GM12878 (cell line): ENCODE measurements at regions of chr11 and their contacts with region 1.

Region 1: GRCh38 chr11:55819330-55819729 is at the start of gene OR5D18:
- DNase-seq: no peak
- ATAC-seq: no peak
- H3K4me3 ChIP-seq: no peak within 1 kb of the TSS
- H3K27ac ChIP-seq: no peak within 1 kb of the TSS
- H3K4me1 ChIP-seq: no peaks in the 10 kb centered on the region
- H3K27me3 ChIP-seq: no peaks in the 10 kb centered on the region
- CTCF ChIP-seq: no peak
- EP300 ChIP-seq: no peak
- POLR2A ChIP-seq: no peak
- RAD21 ChIP-seq: no peak
- polyA plus RNA-seq, gene OR5D18: not detected

Region 2: DNA sequence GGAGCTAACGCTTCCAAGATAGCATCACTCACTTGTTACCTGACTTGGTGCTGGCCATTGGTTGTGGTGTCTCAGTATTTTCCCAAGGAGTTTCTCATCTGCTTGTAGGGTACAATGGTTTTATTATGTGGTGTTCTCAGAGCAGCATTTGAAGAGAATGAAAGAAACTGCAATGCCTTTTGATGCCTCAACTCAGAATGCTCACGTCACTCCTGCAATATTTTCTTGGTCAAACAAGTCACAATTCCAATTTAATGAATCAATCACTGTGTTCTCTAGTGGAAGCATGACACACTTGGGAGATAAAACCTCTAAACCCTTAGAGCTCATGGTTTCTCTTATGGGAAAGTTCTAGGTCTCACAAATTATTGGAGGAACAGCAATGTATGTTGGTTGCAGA is 26.0 kb before region 1 on chr11:
- CTCF ChIA-PET with region 1: no interaction called
- POLR2A ChIA-PET with region 1: no interaction called
- RAD21 ChIA-PET with region 1: no interaction called
- SMC1A ChIA-PET with region 1: no interaction called
- in situ Hi-C with region 1: no loop called
- intact Hi-C with region 1: no loop called
- DNase-seq: no peak
- ATAC-seq: no peak
- H3K4me3 ChIP-seq: no peak overlapping the region
- H3K27ac ChIP-seq: no peak overlapping the region
- H3K4me1 ChIP-seq: no peaks in the 10 kb centered on the region
- H3K27me3 ChIP-seq: no peaks in the 10 kb centered on the region
- CTCF ChIP-seq: no peak
- EP300 ChIP-seq: no peak
- POLR2A ChIP-seq: no peak
- RAD21 ChIP-seq: no peak

Region 3: GRCh38 chr11:55838452-55838851 is 19.1 kb after region 1 on chr11 and contains the start of gene OR5D16:
- CTCF ChIA-PET with region 1: no interaction called
- POLR2A ChIA-PET with region 1: no interaction called
- RAD21 ChIA-PET with region 1: no interaction called
- SMC1A ChIA-PET with region 1: no interaction called
- in situ Hi-C with region 1: no loop called
- intact Hi-C with region 1: loop called (anchors 1 kb)
- DNase-seq: no peak
- ATAC-seq: no peak
- H3K4me3 ChIP-seq: no peak within 1 kb of the TSS
- H3K27ac ChIP-seq: no peak within 1 kb of the TSS
- H3K4me1 ChIP-seq: no peaks in the 10 kb centered on the region
- H3K27me3 ChIP-seq: no peaks in the 10 kb centered on the region
- CTCF ChIP-seq: no peak
- EP300 ChIP-seq: no peak
- POLR2A ChIP-seq: no peak
- RAD21 ChIP-seq: no peak
- polyA plus RNA-seq, gene OR5D16: not detected

Region 4: GRCh38 chr11:55914482-55914881 is 95.2 kb after region 1 on chr11 and contains the start of gene OR5W2:
- CTCF ChIA-PET with region 1: no interaction called
- POLR2A ChIA-PET with region 1: no interaction called
- RAD21 ChIA-PET with region 1: no interaction called
- SMC1A ChIA-PET with region 1: no interaction called
- in situ Hi-C with region 1: no loop called
- intact Hi-C with region 1: loop called (anchors 10 kb)
- DNase-seq: no peak
- ATAC-seq: no peak
- H3K4me3 ChIP-seq: no peak within 1 kb of the TSS
- H3K27ac ChIP-seq: no peak within 1 kb of the TSS
- H3K4me1 ChIP-seq: no peaks in the 10 kb centered on the region
- H3K27me3 ChIP-seq: no peaks in the 10 kb centered on the region
- CTCF ChIP-seq: no peak
- EP300 ChIP-seq: no peak
- POLR2A ChIP-seq: no peak
- RAD21 ChIP-seq: no peak
- polyA plus RNA-seq, gene OR5W2: not detected